AG04449 (cell line): ENCODE measurements at regions of chr3 and their contacts with region 1.

Region 1: GRCh38 chr3:187319699-187320302 is 28.3 kb upstream of the MASP1 start:
- DNase-seq: no peak
- H3K4me3 ChIP-seq: no peak overlapping the region
- CTCF ChIP-seq: peak; percentile 86

Region 2: DNA sequence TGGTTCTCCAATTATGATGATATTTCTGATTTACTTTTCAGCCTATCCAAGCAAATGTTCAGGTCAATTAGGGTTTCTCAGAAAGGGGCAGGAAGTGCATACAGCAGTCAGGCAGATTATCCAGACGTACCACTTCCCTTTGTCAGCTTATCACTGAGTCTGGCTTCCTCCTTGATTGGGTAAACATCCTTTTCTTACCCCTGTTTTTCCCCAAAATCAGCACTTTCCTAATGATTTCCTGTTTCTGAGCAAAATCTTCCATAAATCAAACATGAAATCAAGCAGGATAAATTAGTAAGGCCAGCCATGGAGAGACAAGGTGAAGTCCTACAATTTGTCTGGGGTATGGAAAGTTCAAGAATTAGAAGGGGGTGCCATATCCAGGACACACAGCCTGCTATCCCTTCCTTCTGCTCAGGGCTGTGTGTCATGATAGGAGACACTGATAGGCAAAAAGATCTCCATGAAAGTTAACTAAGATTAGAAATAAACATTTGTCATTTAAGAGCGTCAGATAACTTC is 448.3 kb before region 1 on chr3:
- CTCF ChIA-PET with region 1: no interaction called
- POLR2A ChIA-PET with region 1: no interaction called
- DNase-seq: no peak
- H3K4me3 ChIP-seq: no peak overlapping the region
- CTCF ChIP-seq: no peak

Region 3: GRCh38 chr3:187112934-187113793 is 206.6 kb before region 1 on chr3:
- CTCF ChIA-PET with region 1: interaction called, 49 read pairs
- POLR2A ChIA-PET with region 1: no interaction called
- DNase-seq: no peak
- H3K4me3 ChIP-seq: no peak overlapping the region
- CTCF ChIP-seq: peak; percentile 39

Region 4: GRCh38 chr3:187264021-187264420 is 55.8 kb before region 1 on chr3:
- CTCF ChIA-PET with region 1: interaction called, 40 read pairs
- POLR2A ChIA-PET with region 1: interaction called, 3 read pairs
- DNase-seq: peak; percentile 56
- H3K4me3 ChIP-seq: no peak overlapping the region
- CTCF ChIP-seq: no peak

Region 5: DNA sequence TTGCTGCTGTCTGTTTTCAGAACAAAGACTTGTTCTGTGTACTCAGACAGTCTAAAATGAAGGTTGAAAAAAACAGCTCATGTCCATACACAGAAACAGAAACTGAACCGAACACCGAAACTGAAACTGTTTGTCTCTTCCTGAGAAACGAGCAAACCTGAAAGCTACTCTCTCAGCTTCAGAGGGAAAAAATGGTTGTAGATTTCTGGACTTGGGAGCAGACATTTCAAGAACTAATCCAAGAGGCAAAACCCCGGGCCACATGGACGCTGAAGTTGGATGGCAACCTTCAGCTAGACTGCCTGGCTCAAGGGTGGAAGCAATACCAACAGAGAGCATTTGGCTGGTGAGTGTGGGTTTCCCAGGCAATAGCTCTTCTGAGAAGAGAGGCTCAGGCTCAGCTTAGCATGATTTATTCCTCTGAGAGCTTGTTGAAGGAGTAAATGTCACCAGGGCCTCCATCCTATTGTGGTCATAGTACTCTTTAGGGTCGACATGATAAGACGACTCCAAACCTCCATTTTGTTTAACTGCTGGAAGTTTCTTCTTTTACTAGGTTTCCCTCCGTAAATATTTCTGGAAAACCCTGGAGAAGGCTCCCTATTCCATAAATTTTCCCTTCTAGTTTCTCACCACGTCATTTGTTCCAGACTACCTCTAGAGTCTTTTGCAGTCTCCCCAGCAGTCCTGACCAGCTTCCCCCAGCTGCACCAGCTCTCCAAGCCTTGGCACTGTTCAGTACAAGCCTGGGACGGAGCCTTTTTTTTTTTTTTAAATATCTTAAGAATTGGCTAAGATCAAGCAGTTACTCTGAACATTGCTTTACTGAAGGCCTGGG is 48.7 kb after region 1 on chr3 and contains the start of gene RTP4:
- CTCF ChIA-PET with region 1: interaction called, 15 read pairs
- POLR2A ChIA-PET with region 1: no interaction called
- DNase-seq: no peak
- H3K4me3 ChIP-seq: no peak within 1 kb of the TSS
- CTCF ChIP-seq: no peak

Region 6: DNA sequence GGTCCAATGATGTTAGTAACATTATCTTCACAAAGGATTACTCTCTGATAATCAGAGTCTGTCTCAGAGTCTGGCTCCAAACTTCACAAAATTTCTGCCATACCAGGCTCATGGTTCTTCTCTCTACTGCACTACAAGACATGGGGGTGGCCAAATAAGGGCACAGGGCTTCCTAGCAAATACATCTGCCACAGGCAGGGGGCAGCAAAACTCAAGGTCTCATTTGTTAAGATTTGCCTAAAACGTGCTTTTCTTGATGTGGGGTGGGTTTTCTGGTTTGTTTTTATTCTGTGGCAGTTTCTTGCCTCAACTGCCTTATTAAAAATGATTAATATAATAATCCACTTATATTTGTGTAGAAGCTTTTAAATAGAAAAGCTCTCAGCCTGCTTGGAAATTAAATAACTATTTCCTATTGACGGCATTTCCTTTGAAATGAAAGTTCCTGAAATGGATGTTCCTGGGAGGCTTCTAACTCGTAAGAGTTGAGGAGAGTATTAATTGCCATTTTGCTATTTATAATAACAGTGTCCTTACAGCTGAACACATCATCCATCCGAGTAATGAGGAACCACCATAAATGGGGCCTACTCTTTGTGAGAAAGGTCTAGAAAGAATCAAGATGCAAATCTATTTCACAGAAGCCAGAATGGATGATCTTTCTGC is 296.6 kb after region 1 on chr3:
- CTCF ChIA-PET with region 1: interaction called, 41 read pairs
- POLR2A ChIA-PET with region 1: no interaction called
- DNase-seq: no peak
- H3K4me3 ChIP-seq: no peak overlapping the region
- CTCF ChIP-seq: peak; percentile 66

Region 7: GRCh38 chr3:187679638-187680396 is 360.0 kb after region 1 on chr3:
- CTCF ChIA-PET with region 1: interaction called, 1,530 read pairs
- POLR2A ChIA-PET with region 1: interaction called, 6 read pairs
- DNase-seq: no peak
- H3K4me3 ChIP-seq: no peak overlapping the region
- CTCF ChIP-seq: peak; percentile 93

Region 8: DNA sequence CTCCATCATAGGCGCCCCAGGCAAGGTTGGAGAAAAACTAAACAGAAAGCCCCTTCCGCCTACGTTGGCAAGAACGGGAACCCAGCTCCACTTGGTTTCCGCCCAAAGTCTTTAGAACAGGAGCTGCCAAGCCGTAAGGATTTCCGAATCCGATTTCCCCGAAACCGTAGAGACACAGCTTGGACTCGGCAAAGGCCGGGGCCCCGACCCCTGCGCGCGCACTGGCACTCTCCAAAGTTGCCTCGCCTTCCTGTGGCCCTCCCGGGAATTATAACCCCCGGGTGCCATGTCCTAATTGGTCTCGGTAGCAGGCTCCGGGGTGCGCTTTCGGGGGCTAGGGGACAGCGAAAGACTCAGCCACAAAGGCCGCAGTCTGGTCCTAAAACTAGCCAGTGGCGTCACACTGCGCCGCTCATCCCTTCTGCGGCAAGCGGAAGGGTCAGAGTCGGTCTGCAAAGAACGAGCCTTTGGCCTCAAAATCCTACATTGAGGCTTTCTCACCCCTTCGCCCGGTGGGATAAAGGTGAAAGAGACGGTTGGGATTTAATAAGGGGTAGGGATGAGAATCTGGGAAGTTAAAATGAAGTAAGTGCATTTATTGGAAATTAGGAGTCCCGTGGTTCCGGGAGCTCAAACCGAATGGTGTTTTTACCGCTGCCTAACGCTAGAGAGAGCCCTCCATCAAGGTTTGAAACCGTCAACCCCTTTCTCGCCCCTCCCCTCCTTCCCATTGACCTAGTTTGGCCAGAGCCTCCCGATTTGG is 418.7 kb after region 1 on chr3:
- CTCF ChIA-PET with region 1: no interaction called
- POLR2A ChIA-PET with region 1: no interaction called
- DNase-seq: no peak
- H3K4me3 ChIP-seq: peak overlapping the region; percentile 94
- CTCF ChIP-seq: peak; percentile 76